AG04450 (cell line): ENCODE measurements at regions of chr6 and their contacts with region 1.

Region 1: DNA sequence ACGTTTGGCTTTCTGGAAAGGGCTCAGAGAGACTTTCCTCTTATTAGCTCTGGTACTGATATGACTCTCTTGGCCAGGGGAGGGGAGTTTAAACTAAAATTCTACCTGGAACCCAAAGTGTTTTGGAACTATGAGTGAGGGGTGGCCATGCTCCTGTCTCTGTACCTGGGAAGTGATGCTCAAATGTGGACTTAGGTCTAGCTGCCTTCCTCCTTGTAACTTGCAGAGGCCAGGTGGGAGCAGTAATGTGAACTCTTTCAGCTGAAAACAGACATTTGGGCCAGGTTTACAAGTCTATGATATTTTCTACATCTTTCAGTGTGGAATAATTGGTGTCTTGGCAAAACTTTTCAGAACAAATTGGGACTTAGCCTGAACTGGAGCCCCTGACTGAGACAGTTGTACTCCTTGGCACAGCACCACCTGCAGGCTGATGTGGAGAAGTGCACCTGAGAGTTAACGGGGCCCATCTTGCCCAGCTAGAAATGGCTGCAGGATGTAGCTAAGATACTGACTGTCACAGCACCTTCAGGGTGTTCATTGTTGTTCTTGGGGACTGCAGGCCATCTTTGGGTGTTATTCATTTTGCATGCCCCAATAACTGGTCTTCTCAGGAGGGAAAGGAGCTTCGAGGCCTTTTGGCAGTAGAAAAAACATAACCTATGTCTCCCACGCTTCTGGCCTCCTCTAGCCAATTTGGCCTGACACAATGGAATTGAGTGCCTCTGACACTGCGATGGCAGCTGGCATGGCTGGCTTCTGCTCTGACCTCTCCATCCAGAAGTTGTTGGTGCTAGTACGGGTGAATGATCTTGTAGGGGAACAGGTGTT is 37.1 kb downstream of the CD109 start:
- DNase-seq: peak; percentile 53
- H3K4me3 ChIP-seq: no peak overlapping the region
- H3K27ac ChIP-seq: no peak overlapping the region
- H3K27me3 ChIP-seq: no peaks in the 10 kb centered on the region
- CTCF ChIP-seq: peak; percentile 93

Region 2: DNA sequence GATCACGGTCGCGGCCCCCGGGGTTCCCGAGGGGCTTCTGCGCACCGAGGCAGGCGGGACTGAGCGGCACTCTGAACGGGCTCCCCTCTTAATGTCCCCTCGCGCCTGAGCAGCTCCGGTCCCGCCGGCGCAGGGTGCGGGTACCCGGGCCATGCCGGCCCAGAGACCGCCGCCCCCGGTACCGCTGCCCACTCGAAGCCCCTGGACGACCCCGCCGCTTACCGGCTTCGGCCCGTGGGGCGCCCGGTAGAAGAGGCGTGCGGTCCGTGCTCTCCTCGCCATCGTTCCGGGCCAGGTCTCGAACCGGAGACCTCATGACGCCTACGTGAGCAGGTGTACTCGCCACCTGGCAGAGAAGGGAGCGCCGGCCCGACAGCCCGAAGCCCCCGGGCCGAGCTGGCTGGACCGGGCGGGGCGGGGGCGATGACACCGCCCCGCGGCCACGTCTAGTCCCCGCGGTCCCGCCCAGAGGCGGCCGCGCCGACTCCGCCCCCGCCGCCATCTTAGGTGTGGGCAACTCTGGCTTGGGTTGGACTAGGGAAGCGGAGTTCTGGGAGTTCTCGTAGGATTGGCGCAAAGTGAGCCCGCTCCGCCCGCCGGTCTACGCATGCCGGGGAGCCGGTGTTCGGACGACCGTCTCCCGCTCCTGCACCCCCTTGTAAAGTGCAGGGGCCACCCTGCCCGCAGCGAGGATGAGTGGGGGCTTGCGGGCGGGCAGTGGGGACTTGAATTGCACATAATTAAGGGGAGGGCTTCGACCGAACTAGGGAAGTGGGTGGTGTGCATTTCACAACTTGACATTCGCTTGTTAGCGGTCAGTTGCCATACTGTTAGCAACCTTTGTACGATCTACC is 79.3 kb before region 1 on chr6 and contains the start of gene SLC17A5:
- CTCF ChIA-PET with region 1: interaction called, 23 read pairs
- POLR2A ChIA-PET with region 1: interaction called, 4 read pairs
- DNase-seq: peak; percentile 75
- H3K4me3 ChIP-seq: peak within 1 kb of the TSS; percentile 73
- H3K27ac ChIP-seq: peak within 1 kb of the TSS; percentile 88
- H3K27me3 ChIP-seq: no peaks in the 10 kb centered on the region
- CTCF ChIP-seq: no peak
- polyA plus RNA-seq, gene SLC17A5: 25.9 and 34.0 TPM in 2 replicates

Region 3: GRCh38 chr6:73675466-73676098 is 57.5 kb before region 1 on chr6:
- CTCF ChIA-PET with region 1: interaction called, 147 read pairs
- POLR2A ChIA-PET with region 1: no interaction called
- DNase-seq: peak; percentile 61
- H3K4me3 ChIP-seq: no peak overlapping the region
- H3K27ac ChIP-seq: no peak overlapping the region
- H3K27me3 ChIP-seq: no peaks in the 10 kb centered on the region
- CTCF ChIP-seq: peak; percentile 93

Region 4: DNA sequence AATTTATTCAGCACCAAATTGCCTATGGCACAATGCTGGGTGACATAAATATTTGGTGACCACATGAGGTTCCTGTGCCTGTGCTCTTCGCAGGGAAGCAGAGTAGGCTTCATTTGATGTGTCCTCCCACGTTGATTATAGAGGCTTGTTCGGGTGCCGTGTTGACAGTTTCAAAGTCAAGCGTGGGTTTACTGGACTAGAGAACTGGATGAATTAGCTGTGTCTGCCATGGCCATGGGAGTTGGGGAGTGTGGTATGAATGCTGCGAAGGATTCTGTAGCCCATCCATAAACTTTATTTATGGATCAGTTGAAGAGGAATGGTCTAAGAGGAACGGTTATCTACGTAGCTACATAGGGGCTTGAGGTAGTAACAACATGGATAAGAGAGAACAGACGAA is 26.1 kb before region 1 on chr6:
- CTCF ChIA-PET with region 1: interaction called, 12 read pairs
- POLR2A ChIA-PET with region 1: no interaction called
- DNase-seq: no peak
- H3K4me3 ChIP-seq: no peak overlapping the region
- H3K27ac ChIP-seq: no peak overlapping the region
- H3K27me3 ChIP-seq: no peaks in the 10 kb centered on the region
- CTCF ChIP-seq: no peak

Region 5: GRCh38 chr6:73722318-73723060 is 10.6 kb before region 1 on chr6:
- CTCF ChIA-PET with region 1: interaction called, 32 read pairs
- POLR2A ChIA-PET with region 1: no interaction called
- DNase-seq: peak; percentile 50
- H3K4me3 ChIP-seq: no peak overlapping the region
- H3K27ac ChIP-seq: peak overlapping the region; percentile 79
- H3K27me3 ChIP-seq: no peaks in the 10 kb centered on the region
- CTCF ChIP-seq: no peak

Region 6: GRCh38 chr6:73747289-73747688 is 14.2 kb after region 1 on chr6:
- CTCF ChIA-PET with region 1: interaction called, 23 read pairs
- POLR2A ChIA-PET with region 1: no interaction called
- DNase-seq: no peak
- H3K4me3 ChIP-seq: no peak overlapping the region
- H3K27ac ChIP-seq: no peak overlapping the region
- H3K27me3 ChIP-seq: no peaks in the 10 kb centered on the region
- CTCF ChIP-seq: no peak

Region 7: GRCh38 chr6:73811706-73812105 is 78.6 kb after region 1 on chr6:
- CTCF ChIA-PET with region 1: no interaction called
- POLR2A ChIA-PET with region 1: no interaction called
- DNase-seq: no peak
- H3K4me3 ChIP-seq: no peak overlapping the region
- H3K27ac ChIP-seq: no peak overlapping the region
- H3K27me3 ChIP-seq: no peaks in the 10 kb centered on the region
- CTCF ChIP-seq: no peak